HEK293 (cell line): ENCODE measurements at regions of chr3 and their contacts with region 1.

Region 1: DNA sequence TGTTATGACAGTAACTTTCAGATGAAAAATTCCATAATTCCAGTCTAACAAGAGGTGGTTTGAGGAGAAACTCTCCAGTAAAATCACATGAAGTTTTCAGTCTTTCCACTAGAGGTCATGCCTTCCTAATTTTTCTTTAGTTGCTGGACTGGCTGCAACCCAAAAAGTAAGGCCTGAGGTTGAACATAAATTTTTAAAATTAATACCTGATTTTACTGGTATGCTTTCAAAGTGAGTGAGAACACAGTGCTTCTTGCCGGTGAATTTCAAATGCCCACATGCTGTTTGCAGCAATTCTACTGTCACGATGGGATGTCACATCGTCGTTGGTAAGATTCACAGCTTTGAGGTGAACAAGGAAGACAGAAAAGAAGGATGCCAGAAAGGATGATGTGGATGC is 89.0 kb upstream of the FGF12 start:
- H3K4me3 ChIP-seq: no peak overlapping the region
- H3K27ac ChIP-seq: no peak overlapping the region
- H3K4me1 ChIP-seq: peaks cover 16% of the 10 kb centered on the region
- CTCF ChIP-seq: no peak

Region 2: DNA sequence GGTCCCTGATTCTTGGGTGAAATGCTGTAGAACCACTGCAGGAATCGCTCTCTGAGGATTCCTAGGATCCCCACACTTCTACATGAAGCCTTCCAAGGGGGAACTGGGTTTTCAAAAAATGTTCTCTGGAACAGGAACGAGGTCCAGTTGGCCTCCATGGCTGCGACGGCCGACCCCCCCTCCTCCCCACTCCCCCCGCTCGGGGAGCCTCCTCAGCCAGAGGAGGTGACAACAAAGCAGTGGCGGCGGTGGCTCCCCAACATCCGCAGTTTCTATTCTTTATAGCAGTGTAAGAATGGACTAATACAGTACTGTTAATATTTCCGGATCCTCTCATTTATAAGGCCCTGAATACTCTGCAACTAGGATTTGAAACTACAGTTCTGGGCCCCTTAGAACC is 340.7 kb after region 1 on chr3:
- CTCF ChIA-PET with region 1: no interaction called
- POLR2A ChIA-PET with region 1: no interaction called
- H3K4me3 ChIP-seq: no peak overlapping the region
- H3K27ac ChIP-seq: no peak overlapping the region
- H3K4me1 ChIP-seq: no peaks in the 10 kb centered on the region
- CTCF ChIP-seq: no peak

Region 3: GRCh38 chr3:193194371-193194770 is 378.0 kb after region 1 on chr3:
- CTCF ChIA-PET with region 1: interaction called, 11 read pairs
- POLR2A ChIA-PET with region 1: no interaction called
- H3K4me3 ChIP-seq: no peak overlapping the region
- H3K27ac ChIP-seq: no peak overlapping the region
- H3K4me1 ChIP-seq: no peaks in the 10 kb centered on the region
- CTCF ChIP-seq: no peak